ENCODE measurements at regions of chr17 and their contacts with region 1.

Region 1: DNA sequence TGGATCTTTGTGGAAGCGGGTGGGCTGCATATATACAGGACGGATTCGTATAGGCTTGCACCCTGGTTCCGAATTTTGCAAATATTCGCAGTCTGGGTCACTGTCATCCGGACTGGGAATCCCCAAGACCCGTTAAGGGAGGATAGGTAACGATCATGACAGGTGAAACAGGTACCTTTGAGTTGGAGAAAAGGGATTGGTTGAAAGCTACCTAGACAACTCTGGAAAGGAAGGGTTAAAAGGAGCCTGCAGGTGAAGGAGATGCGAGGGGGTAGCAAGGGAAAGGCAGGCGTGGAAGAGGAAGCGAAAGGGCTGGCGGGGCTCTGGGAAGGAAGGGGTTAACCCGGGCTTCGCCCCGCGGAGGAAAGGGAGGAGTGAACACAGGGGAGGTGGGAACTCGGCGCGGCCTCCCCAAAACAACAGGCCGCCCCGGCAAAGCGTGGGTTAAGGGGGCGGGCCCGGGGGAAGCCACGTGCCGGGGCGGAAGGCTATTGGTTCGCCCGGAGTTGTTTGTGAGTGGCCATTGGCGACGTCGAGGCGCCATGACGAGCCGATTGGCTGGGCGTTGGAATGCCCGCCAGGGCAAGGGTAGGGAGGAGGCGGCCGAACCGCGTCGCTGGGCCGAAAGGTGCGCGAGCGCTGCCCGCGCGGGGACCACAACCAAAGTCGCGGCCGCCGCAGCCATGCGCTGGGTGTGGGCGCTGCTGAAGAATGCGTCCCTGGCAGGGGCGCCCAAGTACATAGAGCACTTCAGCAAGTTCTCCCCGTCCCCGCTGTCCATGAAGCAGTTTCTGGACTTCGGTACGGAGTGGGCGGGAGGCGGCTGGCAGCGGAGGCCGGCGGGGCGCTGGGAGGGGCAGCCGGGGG is at the start of gene PDK2:
- DNase-seq: peak; percentile 95 to 97 (median 97)
- ATAC-seq: peak; percentile 94
- H3K4me3 ChIP-seq: peak within 1 kb of the TSS; percentile 88
- H3K4me1 ChIP-seq: peaks cover 32% of the 10 kb centered on the region
- CTCF ChIP-seq: no peak
- total RNA-seq, gene PDK2: 51.0 to 91.6 (median 72.6) TPM

Region 2: GRCh38 chr17:49996495-49997268 is 98.3 kb before region 1 on chr17:
- intact Hi-C with region 1: no loop called
- DNase-seq: peak; percentile 50 to 72 (median 55)
- ATAC-seq: peak; percentile 63
- H3K4me3 ChIP-seq: no peak overlapping the region
- H3K4me1 ChIP-seq: peaks cover 19% of the 10 kb centered on the region
- CTCF ChIP-seq: peak; percentile 95

Region 3: DNA sequence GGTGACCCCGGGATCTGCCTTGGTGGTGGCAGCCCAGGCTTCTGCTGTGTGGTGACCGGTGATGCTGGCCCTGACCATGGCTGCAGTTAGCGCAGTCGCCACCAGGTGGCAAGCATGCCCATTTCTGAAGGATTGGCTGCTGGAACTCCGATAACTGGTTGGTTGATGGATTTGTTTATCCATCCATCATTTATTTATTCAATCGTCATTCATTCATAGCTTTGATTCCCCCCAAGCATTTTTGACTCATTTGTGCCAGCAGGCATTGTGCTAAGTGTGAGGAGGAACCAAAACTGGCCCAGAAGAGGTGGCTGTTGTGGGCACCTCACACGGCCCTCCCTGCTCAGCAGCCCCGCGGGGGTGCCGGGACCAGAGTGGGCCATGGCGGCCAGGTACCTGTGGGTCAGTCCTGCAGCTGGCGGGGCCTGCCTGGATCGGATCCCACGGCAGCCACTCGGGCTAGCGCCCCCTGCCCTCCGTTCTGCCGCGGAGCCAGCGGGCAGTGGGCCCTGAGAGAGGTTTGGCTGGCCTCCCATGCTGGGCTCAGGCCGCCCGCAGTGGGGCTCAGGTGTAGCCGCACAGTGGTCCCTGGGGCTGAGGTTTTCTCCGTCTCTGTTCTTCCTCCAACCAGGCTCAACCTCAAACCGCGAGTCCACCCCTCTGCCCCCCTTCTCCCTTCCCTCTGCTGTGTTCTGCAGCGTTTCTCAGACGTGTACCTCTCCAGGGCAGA is 67.9 kb before region 1 on chr17:
- intact Hi-C with region 1: loop called in 1 of 2 experiments (anchors 5 kb)
- DNase-seq: peak; percentile 76 to 96 (median 92)
- ATAC-seq: peak; percentile 96
- H3K4me3 ChIP-seq: no peak overlapping the region
- H3K4me1 ChIP-seq: no peaks in the 10 kb centered on the region
- CTCF ChIP-seq: peak; percentile 92

Region 4: GRCh38 chr17:50304781-50305404 is 209.9 kb after region 1 on chr17:
- intact Hi-C with region 1: loop called in 1 of 2 experiments (anchors 10 kb)
- DNase-seq: no peak
- ATAC-seq: peak; percentile 10
- H3K4me3 ChIP-seq: no peak overlapping the region
- H3K4me1 ChIP-seq: no peaks in the 10 kb centered on the region
- CTCF ChIP-seq: no peak

Measured in mucosa of descending colon (tissue), 3 donors.